Naive thymus-derived CD8-positive, alpha-beta T cell (primary cell): ENCODE measurements at regions of chr7 and their contacts with region 1.

Region 1: DNA sequence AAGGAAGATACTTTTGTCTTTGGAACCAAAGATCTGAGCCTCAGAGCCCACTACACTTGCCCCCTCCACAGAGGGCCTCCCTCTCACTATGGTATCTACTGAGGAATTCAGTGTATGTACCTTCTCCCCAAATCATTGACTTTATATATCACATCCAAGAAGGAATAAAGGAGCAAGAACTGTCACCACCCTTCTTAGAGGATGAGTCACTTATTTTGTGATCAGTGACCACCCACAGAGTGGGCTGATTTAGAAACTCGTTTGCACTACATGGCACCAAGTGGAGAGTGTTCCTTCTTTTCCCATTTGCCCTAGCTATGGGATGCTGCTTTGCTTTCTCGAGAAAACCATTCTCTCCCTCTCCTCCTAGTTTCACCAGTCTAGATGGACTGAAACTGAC is 5.7 kb downstream of the TMEM243 start:
- DNase-seq: no peak
- ATAC-seq: no peak
- H3K4me3 Mint-ChIP-seq: peak overlapping the region; percentile 75 to 95 (median 88)
- H3K27ac Mint-ChIP-seq: peak overlapping the region; percentile 88 to 100 (median 95)
- H3K4me1 Mint-ChIP-seq: peaks cover 48 to 97% (median 86%) of the 10 kb centered on the region in 4 donors
- H3K27me3 Mint-ChIP-seq: no peaks in the 10 kb centered on the region

Region 2: DNA sequence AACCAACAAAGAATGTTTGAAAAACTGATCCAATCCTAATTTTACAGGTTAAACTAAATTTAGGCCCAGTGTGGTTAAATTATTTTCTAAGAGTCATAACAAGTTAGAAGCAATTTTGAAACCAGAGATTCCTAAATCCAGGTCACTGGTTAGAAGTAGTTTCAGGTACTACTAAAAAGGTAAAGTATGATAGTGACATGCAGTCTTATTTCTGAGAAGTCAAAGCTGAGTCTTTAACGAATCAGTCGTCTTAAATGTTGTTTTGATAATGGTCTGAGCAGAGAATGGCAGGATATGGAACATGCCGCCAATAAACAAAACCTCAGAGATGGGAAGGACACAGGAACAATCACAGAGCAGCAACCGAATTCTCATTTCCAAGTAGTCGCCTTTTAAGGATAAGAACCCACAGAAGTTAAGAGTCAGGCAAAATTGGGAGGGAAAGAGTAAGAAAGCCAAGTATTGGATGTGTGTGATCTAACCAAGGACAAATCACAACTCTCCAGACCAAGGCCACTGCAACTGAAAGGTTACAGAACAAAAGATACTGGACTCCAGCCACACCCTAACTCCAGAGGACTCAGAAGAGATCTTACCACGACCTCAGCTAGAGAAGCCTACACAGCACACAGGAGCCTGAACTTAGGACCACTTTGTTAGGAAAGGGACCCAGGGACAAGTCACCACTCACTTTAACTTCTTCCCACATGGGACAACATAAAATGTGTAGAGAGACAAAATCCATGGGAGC is 13.9 kb before region 1 on chr7:
- POLR2A ChIA-PET with region 1: interaction called, 50 read pairs
- DNase-seq: no peak
- ATAC-seq: no peak
- H3K4me3 Mint-ChIP-seq: peak overlapping the region in 3 of 10 donors; percentile 20 to 22 (median 21)
- H3K27ac Mint-ChIP-seq: peak overlapping the region; percentile 28 to 84 (median 70)
- H3K4me1 Mint-ChIP-seq: peaks cover 35 to 77% (median 68%) of the 10 kb centered on the region in 4 donors
- H3K27me3 Mint-ChIP-seq: no peaks in the 10 kb centered on the region

Region 3: DNA sequence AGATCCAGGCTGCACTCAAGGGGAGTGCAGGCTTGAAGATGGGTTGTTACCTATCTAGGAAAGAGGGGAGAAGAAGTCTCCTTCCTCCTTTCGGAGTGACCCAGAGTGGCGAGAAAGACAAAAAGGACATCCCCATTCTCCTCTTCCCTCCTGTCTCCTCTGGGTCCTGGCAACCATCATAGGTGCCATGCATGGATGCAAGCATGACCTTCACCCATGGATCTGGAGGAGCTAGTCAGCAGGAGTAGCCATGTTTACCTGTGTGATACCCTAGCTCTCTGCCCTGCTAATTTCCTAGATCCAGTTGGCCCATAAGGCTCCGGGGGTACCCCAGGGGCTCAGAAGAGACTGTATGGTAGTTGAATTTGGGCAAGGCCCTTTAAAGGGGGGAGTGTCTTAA is 114.5 kb after region 1 on chr7:
- POLR2A ChIA-PET with region 1: no interaction called
- DNase-seq: no peak
- ATAC-seq: no peak
- H3K4me3 Mint-ChIP-seq: no peak overlapping the region
- H3K27ac Mint-ChIP-seq: no peak overlapping the region
- H3K4me1 Mint-ChIP-seq: no peaks in the 10 kb centered on the region
- H3K27me3 Mint-ChIP-seq: no peaks in the 10 kb centered on the region

Region 4: DNA sequence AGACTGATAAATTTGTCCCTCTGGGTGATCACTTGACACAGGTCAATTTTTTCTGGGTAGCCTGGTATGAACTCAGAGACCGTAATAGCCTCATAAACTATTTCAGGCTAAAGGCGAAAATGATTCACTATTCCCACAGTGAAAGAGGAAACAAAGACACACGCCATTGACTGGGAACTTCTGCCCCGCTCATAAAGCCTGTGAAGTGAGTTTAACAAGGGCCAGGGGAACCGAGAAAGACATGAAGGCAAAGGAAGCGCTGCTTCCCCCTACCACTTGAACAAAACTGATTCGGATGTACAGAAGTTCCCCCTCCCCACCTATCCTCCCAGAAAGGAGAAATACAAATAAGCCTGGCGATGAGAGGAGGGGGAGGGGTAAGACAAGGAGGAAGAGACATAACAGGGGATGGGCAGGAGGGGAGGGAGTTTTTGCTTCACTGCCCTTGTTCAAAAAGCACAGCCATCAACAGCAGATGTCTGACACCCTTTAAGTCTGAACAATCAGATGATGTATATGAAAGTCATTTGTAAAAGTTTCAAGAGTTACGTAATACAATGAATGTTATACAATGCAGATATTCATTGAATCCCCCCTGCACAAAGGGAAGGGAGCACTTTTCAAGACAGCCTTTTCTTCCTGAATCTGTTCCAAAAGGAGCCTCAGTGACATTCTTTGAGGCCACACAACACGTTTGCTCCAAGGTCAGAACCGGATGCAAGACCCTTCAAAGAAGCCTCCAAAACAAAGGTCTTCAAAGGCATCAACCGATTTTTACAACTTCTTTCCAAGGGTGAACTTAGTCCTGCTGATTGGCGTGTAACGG is 260.9 kb after region 1 on chr7:
- POLR2A ChIA-PET with region 1: no interaction called
- DNase-seq: peak in 3 of 10 donors; percentile 2 to 65 (median 18)
- ATAC-seq: peak; percentile 44 to 64
- H3K4me3 Mint-ChIP-seq: peak overlapping the region; percentile 50 to 83 (median 62)
- H3K27ac Mint-ChIP-seq: peak overlapping the region in 3 of 10 donors; percentile 11 to 80 (median 73)
- H3K4me1 Mint-ChIP-seq: peaks cover 0 to 27% (median 13%) of the 10 kb centered on the region in 4 donors
- H3K27me3 Mint-ChIP-seq: peaks cover 24 to 36% (median 32%) of the 10 kb centered on the region in 5 donors